ENCODE measurements at regions of chr7 and their contacts with region 1.

Region 1: GRCh38 chr7:117458977-117459583 is 20.7 kb upstream of the CFTR start:
- DNase-seq: no peak
- H3K27ac ChIP-seq: no peak overlapping the region
- CTCF ChIP-seq: peak; percentile 78

Region 2: GRCh38 chr7:117715784-117716445 is 256.8 kb after region 1 on chr7:
- CTCF ChIA-PET with region 1: interaction called, 12 read pairs
- POLR2A ChIA-PET with region 1: no interaction called
- DNase-seq: peak; percentile 42
- H3K27ac ChIP-seq: no peak overlapping the region
- CTCF ChIP-seq: peak; percentile 59